ENCODE measurements at regions of chr5 and their contacts with region 1.

Region 1: DNA sequence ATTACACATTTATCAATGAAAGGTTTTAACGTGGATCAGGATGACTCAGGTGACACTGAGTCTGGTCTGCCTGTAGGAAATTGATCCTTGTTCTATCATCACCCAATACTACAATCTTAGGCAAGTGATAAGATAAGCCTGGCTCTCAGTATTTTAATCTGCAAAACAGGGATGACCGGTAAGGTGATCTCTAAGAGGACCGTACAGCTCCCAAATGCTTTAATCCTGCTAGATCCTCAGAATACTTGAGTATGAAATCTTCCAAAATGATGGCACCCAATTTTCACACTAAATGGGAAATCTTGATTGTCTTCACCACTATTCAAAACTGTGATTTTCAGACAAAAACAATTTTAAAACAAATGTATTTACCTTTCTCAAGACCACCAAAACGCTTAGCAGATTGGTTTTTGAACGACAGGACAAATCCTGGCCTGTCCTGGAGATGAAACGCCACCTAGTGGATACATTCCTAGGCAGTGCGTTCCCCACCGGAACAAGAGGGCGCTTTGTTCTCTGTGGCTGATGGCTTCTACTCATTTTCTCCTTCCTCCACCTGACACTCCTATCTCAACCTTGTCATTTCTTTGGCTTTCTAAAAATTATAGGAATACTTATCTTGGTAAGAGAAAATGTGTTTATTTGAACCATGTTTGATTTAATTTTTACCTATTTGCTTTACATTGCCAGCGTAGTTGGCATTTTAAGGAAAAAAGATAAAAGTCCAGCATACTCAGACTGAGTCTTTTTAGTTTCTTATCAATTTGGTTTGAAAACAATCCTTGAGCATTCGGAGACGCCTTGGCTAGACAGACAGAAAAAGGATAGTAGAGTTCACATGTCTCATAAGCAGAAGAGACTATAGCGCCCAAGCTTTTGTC is 41.2 kb upstream of the VCAN start:
- DNase-seq: no peak
- ATAC-seq: peak; percentile 65
- H3K4me3 Mint-ChIP-seq: no peak overlapping the region
- H3K27ac Mint-ChIP-seq: no peak overlapping the region
- H3K4me1 Mint-ChIP-seq: no peaks in the 10 kb centered on the region
- H3K27me3 Mint-ChIP-seq: no peaks in the 10 kb centered on the region
- CTCF ChIP-seq: peak; percentile 61

Region 2: DNA sequence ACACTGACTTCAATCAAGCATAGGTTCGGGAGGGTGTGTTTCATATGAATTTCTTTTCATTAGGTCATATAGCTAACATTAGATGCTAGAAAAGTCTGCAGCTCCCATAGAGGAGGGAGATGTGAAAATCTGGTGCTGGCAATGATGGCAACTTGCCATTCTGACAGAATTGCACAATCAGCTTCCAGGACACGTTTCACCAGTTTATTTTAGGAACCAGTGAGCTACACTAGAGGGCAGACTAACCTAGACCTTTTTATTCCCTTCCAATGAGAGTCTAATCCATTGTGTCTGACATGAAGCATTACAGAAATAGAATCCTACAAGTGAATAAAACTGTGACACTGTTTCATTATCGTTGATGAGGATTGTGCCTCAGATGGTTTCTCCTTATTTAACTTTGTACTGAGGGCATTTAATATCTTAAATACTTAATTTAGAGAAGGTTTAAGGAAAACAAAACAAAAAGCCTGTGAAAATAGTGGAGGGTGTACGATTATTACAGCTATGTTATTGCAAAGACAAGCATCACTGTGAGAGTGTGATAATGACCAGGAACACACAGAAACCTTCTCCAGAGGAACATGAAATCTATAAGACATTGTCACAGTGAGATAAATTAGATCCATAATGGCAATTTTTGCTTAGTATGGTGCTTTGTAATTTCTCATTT is 788.9 kb before region 1 on chr5:
- CTCF ChIA-PET with region 1: interaction called, 24 read pairs
- POLR2A ChIA-PET with region 1: no interaction called
- intact Hi-C with region 1: loop called (anchors 1 kb)
- DNase-seq: no peak
- ATAC-seq: no peak
- H3K4me3 Mint-ChIP-seq: no peak overlapping the region
- H3K27ac Mint-ChIP-seq: no peak overlapping the region
- H3K4me1 Mint-ChIP-seq: no peaks in the 10 kb centered on the region
- H3K27me3 Mint-ChIP-seq: no peaks in the 10 kb centered on the region
- CTCF ChIP-seq: peak; percentile 14

Region 3: GRCh38 chr5:82885627-82886389 is 544.6 kb before region 1 on chr5:
- CTCF ChIA-PET with region 1: no interaction called
- POLR2A ChIA-PET with region 1: no interaction called
- intact Hi-C with region 1: loop called (anchors 1 kb)
- DNase-seq: no peak
- ATAC-seq: no peak
- H3K4me3 Mint-ChIP-seq: no peak overlapping the region
- H3K27ac Mint-ChIP-seq: no peak overlapping the region
- H3K4me1 Mint-ChIP-seq: peaks cover 8% of the 10 kb centered on the region
- H3K27me3 Mint-ChIP-seq: no peaks in the 10 kb centered on the region
- CTCF ChIP-seq: no peak

Region 4: DNA sequence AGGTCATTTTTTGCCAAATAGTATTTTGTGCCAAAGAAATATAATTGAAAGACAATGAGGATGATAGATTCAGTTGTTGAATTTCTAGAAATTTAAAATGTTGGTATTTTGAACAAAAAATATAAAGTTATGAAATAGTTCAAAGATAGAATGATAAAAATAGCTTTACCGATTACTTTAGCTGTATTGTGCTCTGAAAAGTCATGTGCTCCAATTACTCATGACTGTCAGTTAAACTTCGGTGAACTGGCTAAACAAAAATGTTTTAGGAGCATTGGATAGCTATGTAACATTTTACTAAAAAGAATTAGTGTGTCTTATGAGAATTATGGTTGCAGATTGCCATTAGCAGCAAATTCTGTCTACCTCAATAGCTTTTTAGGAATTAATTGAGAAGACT is 136.1 kb before region 1 on chr5:
- CTCF ChIA-PET with region 1: no interaction called
- POLR2A ChIA-PET with region 1: no interaction called
- intact Hi-C with region 1: no loop called
- DNase-seq: no peak
- ATAC-seq: no peak
- H3K4me3 Mint-ChIP-seq: no peak overlapping the region
- H3K27ac Mint-ChIP-seq: no peak overlapping the region
- H3K4me1 Mint-ChIP-seq: no peaks in the 10 kb centered on the region
- H3K27me3 Mint-ChIP-seq: no peaks in the 10 kb centered on the region
- CTCF ChIP-seq: no peak

Region 5: GRCh38 chr5:83387041-83387440 is 43.3 kb before region 1 on chr5:
- CTCF ChIA-PET with region 1: no interaction called
- POLR2A ChIA-PET with region 1: no interaction called
- intact Hi-C with region 1: no loop called
- DNase-seq: no peak
- ATAC-seq: no peak
- H3K4me3 Mint-ChIP-seq: no peak overlapping the region
- H3K27ac Mint-ChIP-seq: no peak overlapping the region
- H3K4me1 Mint-ChIP-seq: no peaks in the 10 kb centered on the region
- H3K27me3 Mint-ChIP-seq: no peaks in the 10 kb centered on the region
- CTCF ChIP-seq: no peak

Region 6: GRCh38 chr5:83401775-83402174 is 28.6 kb before region 1 on chr5:
- CTCF ChIA-PET with region 1: no interaction called
- POLR2A ChIA-PET with region 1: no interaction called
- intact Hi-C with region 1: no loop called
- DNase-seq: no peak
- ATAC-seq: no peak
- H3K4me3 Mint-ChIP-seq: no peak overlapping the region
- H3K27ac Mint-ChIP-seq: no peak overlapping the region
- H3K4me1 Mint-ChIP-seq: no peaks in the 10 kb centered on the region
- H3K27me3 Mint-ChIP-seq: no peaks in the 10 kb centered on the region
- CTCF ChIP-seq: no peak

Region 7: DNA sequence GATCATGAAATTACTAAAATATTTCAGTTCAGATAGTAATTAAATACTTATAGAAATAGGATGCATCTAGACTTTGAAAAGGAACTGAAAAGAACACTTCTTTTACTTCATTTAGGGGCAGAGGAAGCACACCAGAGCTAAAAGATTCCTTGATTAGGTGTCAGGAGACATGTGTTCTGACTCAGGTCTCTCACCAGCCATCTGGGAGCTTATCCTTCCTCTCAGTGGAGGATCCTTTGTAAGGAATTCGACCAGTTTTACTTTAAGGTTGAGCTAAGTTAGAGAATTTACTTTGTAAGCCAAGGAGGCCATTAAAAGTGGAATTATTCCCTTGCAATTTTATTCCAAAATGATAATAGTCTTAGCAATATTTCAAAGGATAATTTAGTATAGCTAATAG is 57.9 kb after region 1 on chr5:
- CTCF ChIA-PET with region 1: no interaction called
- POLR2A ChIA-PET with region 1: no interaction called
- intact Hi-C with region 1: no loop called
- DNase-seq: no peak
- ATAC-seq: no peak
- H3K4me3 Mint-ChIP-seq: no peak overlapping the region
- H3K27ac Mint-ChIP-seq: no peak overlapping the region
- H3K4me1 Mint-ChIP-seq: no peaks in the 10 kb centered on the region
- H3K27me3 Mint-ChIP-seq: peaks cover 2% of the 10 kb centered on the region
- CTCF ChIP-seq: no peak

Region 8: DNA sequence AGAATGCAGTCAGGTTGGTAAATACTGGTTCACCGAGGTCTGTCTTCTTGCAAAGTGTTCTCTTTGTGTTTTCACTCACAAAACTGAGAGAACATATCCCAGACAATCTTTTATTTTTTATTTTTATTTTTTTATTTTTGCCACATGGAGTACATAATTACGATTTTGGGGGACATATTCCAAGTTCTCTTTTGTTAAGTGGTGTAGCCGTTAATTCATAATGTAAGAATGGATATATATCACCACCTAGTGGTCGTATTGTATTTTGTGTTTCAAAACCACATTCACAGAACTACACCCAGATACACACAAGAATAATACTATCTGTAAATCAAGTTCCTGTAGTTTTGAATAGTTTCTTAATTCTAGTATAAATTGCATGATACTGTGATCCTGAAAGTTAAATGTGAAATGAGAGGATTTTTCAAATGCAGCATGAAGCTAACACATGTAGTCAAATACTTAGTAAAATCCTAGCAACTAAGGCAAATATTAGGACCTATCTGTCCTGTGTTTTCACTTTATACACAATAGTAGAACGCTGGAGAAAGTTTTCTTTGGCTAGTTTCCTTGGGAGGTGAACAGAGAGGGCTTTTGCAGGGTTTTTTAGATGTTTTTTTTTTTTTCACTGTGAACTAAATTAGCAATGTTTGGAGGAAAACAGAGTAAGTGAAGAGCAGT is 133.8 kb after region 1 on chr5:
- CTCF ChIA-PET with region 1: no interaction called
- POLR2A ChIA-PET with region 1: no interaction called
- intact Hi-C with region 1: loop called (anchors 2 kb)
- DNase-seq: no peak
- ATAC-seq: no peak
- H3K4me3 Mint-ChIP-seq: no peak overlapping the region
- H3K27ac Mint-ChIP-seq: no peak overlapping the region
- H3K4me1 Mint-ChIP-seq: no peaks in the 10 kb centered on the region
- H3K27me3 Mint-ChIP-seq: peaks cover 7% of the 10 kb centered on the region
- CTCF ChIP-seq: peak; percentile 71

Measured in activated B cell treated with CpG ODN at 0.5 μM for 24 hours (primary cell).